ENCODE measurements at regions of chr13 and their contacts with region 1.

Region 1: DNA sequence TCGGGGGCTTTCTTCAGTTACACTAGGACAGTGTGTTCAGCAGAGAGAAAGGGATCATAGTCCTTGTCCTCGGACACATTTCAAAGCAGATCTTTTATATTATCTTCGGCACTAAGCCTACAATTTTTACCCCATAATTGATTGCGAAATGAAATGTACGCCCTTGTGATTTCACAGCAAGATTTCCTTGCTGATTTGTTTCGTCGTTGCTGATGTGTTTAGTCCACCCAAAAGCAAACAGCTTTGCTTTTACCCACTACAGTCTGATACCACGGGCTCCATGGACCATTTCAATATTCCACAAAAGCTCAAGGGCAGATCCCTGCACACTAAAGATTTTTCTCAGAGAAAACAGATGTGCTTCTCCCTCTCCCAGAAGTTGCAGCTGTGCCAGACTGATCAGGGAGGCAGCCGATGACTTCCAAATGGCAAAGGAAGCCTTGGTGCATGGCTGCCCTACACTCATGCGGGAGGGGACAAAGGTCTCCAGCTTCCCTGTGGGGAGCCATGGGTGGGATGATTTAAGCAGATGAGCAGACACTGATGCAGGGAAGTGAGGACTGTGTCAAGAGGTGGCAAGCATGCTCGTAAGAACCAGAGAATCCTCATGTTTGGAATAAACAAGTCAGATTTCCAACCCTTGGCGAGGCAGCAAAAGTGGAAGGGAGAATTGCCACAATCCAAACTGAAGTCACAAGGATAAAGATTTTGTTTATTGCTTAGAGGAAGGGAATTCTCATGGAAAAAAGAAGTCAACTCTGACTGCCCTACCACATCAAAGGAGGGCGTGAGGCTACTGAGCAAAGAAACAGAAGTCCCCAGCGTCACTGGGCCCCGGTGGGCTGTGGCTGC is 81.1 kb downstream of the STK24 start:
- DNase-seq: peak; percentile 45
- H3K4me3 ChIP-seq: no peak overlapping the region
- H3K27ac ChIP-seq: peak overlapping the region; percentile 52 to 81 (median 75)
- H3K4me1 ChIP-seq: peaks cover 27 to 59% (median 32%) of the 10 kb centered on the region in 4 donors
- H3K27me3 ChIP-seq: no peaks in the 10 kb centered on the region
- CTCF ChIP-seq: no peak
- EP300 ChIP-seq: no peak
- POLR2A ChIP-seq: no peak

Region 2: DNA sequence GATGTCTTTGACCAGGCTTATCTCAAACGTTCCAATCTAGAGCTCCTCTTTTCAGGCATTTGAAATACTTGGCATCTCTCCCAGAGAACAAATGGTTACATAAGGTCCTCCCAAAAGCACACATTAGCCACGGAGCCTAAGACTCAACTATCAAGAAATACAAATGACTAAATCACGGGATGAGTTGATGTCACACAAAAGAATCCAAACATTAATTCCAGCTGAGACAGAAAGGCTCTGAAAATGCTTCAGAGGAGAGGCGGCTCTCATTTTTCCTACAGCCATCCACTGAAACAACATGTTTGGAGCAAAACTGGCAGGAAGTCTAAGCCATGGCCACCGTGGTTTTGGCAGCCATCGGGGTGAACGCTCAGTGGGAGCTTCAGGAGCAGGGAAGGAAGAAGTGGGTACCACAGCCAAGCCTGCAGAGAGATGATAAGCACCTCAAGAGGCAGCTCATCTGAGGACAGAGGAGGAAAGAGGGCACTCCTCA is 41.4 kb before region 1 on chr13:
- in situ Hi-C with region 1: no loop called
- intact Hi-C with region 1: loop called (anchors 5 kb)
- DNase-seq: no peak
- H3K4me3 ChIP-seq: no peak overlapping the region
- H3K27ac ChIP-seq: peak overlapping the region; percentile 50 to 82 (median 62)
- H3K4me1 ChIP-seq: peaks cover 7 to 31% (median 22%) of the 10 kb centered on the region in 4 donors
- H3K27me3 ChIP-seq: no peaks in the 10 kb centered on the region
- CTCF ChIP-seq: no peak
- EP300 ChIP-seq: no peak
- POLR2A ChIP-seq: no peak

Region 3: GRCh38 chr13:98576963-98577822 is 81.3 kb after region 1 on chr13 and contains the start of gene STK24:
- in situ Hi-C with region 1: loop called in 1 of 4 experiments (anchors 10 kb)
- intact Hi-C with region 1: loop called (anchors 5 kb)
- DNase-seq: peak; percentile 78
- H3K4me3 ChIP-seq: peak within 1 kb of the TSS; percentile 82 to 96 (median 82)
- H3K27ac ChIP-seq: peak within 1 kb of the TSS; percentile 97 to 100 (median 100)
- H3K4me1 ChIP-seq: peaks cover 16 to 52% (median 42%) of the 10 kb centered on the region in 4 donors
- H3K27me3 ChIP-seq: no peaks in the 10 kb centered on the region
- CTCF ChIP-seq: no peak
- EP300 ChIP-seq: no peak
- POLR2A ChIP-seq: peak; percentile 60
- total RNA-seq, gene STK24: 87.2 to 152 (median 131) TPM